ENCODE measurements at regions of chr14 and their contacts with region 1.

Region 1: DNA sequence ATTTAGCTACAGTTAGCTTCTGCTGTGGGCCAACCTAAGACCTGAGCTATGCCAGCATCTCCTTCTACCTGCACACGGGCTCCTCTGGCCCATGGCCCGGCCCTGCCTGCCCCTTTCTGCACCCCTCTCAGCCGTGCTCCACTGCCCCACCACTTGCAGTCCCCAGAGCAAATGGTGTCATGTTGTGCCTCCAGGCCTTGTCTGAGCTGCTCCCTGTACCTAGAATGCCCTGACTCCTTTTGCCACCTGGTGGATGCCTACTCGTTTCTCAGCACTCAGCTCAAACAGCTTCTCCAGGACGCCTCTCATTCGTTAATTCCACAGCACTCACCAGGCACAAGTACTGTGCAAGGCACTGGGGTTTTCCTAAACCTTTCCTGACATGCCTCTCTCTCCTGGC is 63.2 kb upstream of the PNMA1 start:
- DNase-seq: no peak
- H3K4me3 ChIP-seq: no peak overlapping the region
- H3K27ac ChIP-seq: no peak overlapping the region
- H3K4me1 ChIP-seq: peaks cover 0 to 3% (median 1%) of the 10 kb centered on the region in 4 experiments; a peak in 3 of 7 replicates
- H3K27me3 ChIP-seq: peaks cover 0 to 26% (median 13%) of the 10 kb centered on the region in 4 experiments; a peak in 6 of 7 replicates
- CTCF ChIP-seq: peak; percentile 43 to 65 (median 54)
- EP300 ChIP-seq: no peak
- POLR2A ChIP-seq: no peak
- RAD21 ChIP-seq: peak; percentile 64 to 71

Region 2: GRCh38 chr14:73700325-73700724 is 77.1 kb before region 1 on chr14:
- CTCF ChIA-PET with region 1: no interaction called
- POLR2A ChIA-PET with region 1: no interaction called
- DNase-seq: no peak
- H3K4me3 ChIP-seq: no peak overlapping the region
- H3K27ac ChIP-seq: no peak overlapping the region
- H3K4me1 ChIP-seq: no peaks in the 10 kb centered on the region
- H3K27me3 ChIP-seq: no peaks in the 10 kb centered on the region
- CTCF ChIP-seq: no peak
- EP300 ChIP-seq: no peak
- POLR2A ChIP-seq: no peak
- RAD21 ChIP-seq: no peak

Region 3: DNA sequence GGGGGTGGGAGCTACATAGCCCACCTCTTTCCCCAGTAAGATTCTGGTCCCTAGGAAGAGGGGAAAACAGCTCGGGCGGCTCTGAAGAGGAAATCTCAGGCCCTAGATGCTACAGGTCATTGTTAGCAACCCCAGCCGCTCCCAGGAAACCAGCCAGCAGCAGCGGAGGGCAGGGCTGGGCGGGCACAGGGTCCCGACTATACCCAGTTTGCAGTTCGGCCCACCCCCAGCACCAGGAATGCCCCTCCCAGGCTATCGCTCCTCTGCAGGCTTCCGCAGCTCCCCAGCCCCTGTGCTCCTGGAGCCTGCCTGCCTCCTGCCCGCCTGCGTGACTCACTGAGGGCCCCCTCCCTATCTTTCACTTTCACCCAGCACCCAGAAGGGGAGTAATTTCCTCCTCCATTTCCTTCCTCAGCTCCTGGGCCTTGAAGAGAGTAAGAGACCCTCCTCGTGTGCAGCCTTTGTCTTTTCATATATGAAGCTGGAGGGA is 36.0 kb before region 1 on chr14:
- CTCF ChIA-PET with region 1: interaction called, 13 read pairs
- POLR2A ChIA-PET with region 1: interaction called, 4 read pairs
- DNase-seq: peak; percentile 47 to 74
- H3K4me3 ChIP-seq: peak overlapping the region in 3 of 4 experiments; percentile 1 to 43 (median 19); a peak in 4 of 8 replicates
- H3K27ac ChIP-seq: peak overlapping the region; percentile 31; the same call in 1 of the 2 replicates
- H3K4me1 ChIP-seq: peaks cover 6 to 41% (median 30%) of the 10 kb centered on the region in 4 experiments
- H3K27me3 ChIP-seq: no peaks in the 10 kb centered on the region
- CTCF ChIP-seq: no peak
- EP300 ChIP-seq: no peak
- POLR2A ChIP-seq: no peak
- RAD21 ChIP-seq: no peak

Region 4: GRCh38 chr14:73746520-73747378 is 30.7 kb before region 1 on chr14:
- CTCF ChIA-PET with region 1: interaction called, 22 read pairs
- POLR2A ChIA-PET with region 1: interaction called, 4 read pairs
- DNase-seq: no peak
- H3K4me3 ChIP-seq: no peak overlapping the region
- H3K27ac ChIP-seq: no peak overlapping the region
- H3K4me1 ChIP-seq: peaks cover 13 to 40% (median 26%) of the 10 kb centered on the region in 4 experiments
- H3K27me3 ChIP-seq: no peaks in the 10 kb centered on the region
- CTCF ChIP-seq: peak; percentile 42 to 60 (median 55)
- EP300 ChIP-seq: no peak
- POLR2A ChIP-seq: no peak
- RAD21 ChIP-seq: peak; percentile 57 to 68

Region 5: DNA sequence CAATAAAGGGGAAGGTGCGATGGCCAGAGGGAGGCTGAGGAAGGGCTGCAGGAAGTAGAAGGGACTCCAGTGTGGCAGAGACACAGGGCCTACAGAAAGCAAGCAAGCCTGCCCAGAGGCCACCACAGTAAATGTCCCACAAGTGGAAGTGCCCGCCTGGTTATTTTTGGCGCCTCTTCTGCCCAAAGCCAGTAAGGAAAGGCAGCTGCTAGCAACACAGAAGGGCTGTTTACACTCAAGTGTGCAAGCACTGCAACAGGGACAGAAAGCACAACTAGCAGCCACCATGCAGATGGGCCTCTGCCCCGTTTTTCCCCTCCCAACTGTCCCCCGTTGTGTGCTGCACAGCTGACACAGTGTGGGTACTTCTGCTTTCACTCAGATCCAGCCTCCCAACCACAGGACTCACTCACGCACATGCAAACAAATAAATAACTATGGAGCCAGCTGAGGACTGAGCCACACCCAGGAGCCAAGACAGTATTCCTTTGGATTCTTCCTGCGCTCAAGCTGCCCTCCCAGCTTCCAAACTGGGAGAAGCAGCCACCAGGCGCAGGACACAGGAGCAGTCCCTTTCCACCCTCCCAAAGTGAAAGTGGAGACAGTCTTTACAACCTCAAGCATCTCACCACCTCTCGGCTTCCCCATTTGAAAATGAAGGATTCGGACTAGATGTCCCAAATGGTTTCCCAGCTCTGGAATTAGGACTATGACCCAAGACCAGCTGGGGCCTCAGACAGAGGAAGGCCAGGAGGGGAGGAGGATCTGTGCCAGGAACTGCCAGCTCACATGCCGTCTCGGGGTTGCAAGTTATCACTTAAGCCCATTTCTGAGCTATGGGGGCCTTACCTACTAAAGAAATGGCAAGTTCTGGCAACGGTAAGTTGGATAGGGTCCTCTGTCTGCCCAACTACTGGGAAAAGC is 23.2 kb before region 1 on chr14:
- CTCF ChIA-PET with region 1: interaction called, 24 read pairs
- POLR2A ChIA-PET with region 1: interaction called, 17 read pairs
- DNase-seq: no peak
- H3K4me3 ChIP-seq: no peak overlapping the region
- H3K27ac ChIP-seq: no peak overlapping the region
- H3K4me1 ChIP-seq: peaks cover 4 to 25% (median 8%) of the 10 kb centered on the region in 4 experiments
- H3K27me3 ChIP-seq: peaks cover 0 to 9% (median 8%) of the 10 kb centered on the region in 4 experiments; a peak in 5 of 7 replicates
- CTCF ChIP-seq: no peak
- EP300 ChIP-seq: no peak
- POLR2A ChIP-seq: no peak
- RAD21 ChIP-seq: no peak